ENCODE measurements at regions of chr5 and their contacts with region 1.

Region 1: GRCh38 chr5:126339215-126339805 is 83.9 kb upstream of the GRAMD2B start:
- DNase-seq: no peak
- H3K4me3 ChIP-seq: no peak overlapping the region
- H3K27ac ChIP-seq: no peak overlapping the region
- H3K4me1 ChIP-seq: no peaks in the 10 kb centered on the region
- H3K27me3 ChIP-seq: no peaks in the 10 kb centered on the region
- CTCF ChIP-seq: peak; percentile 78 to 93 (median 91)
- EP300 ChIP-seq: no peak
- POLR2A ChIP-seq: no peak

Region 2: DNA sequence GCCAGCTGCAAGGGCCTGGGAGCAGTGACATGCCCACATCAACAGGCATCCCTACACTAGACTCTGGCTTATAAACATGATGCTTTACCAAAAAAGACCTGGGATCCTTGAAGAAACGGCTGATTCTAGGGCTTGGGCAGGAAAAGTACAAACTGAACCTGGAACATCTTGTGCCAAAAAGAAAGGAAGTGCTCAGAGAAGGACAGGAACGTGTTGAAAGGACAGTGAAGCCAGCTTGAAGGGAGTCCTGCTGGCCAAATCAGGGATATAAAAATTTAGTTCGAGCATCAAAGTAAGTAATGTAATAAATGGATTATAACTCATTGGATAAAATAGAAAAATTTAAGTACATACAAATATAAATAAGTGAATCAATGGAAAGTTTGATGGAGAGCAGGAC is 197.6 kb after region 1 on chr5:
- intact Hi-C with region 1: loop called (anchors 2 kb)
- DNase-seq: no peak
- H3K4me3 ChIP-seq: no peak overlapping the region
- H3K27ac ChIP-seq: peak overlapping the region in 2 of 4 donors; percentile 3 to 26
- H3K4me1 ChIP-seq: peaks cover 4 to 34% (median 27%) of the 10 kb centered on the region in 4 donors
- H3K27me3 ChIP-seq: no peaks in the 10 kb centered on the region
- CTCF ChIP-seq: peak in 1 of 3 experiments; percentile 28
- EP300 ChIP-seq: peak; percentile 31
- POLR2A ChIP-seq: no peak

Region 3: GRCh38 chr5:126600631-126601511 is 261.6 kb after region 1 on chr5 and contains the start of gene PHAX:
- intact Hi-C with region 1: loop called (anchors 2 kb)
- DNase-seq: no peak
- H3K4me3 ChIP-seq: peak within 1 kb of the TSS; percentile 88 to 99 (median 94)
- H3K27ac ChIP-seq: peak within 1 kb of the TSS; percentile 85 to 95 (median 90)
- H3K4me1 ChIP-seq: peaks cover 31 to 51% (median 41%) of the 10 kb centered on the region in 4 donors
- H3K27me3 ChIP-seq: no peaks in the 10 kb centered on the region
- CTCF ChIP-seq: peak; percentile 70 to 78 (median 76)
- EP300 ChIP-seq: no peak
- POLR2A ChIP-seq: no peak
- total RNA-seq, gene PHAX: 37.8 to 49.0 (median 42.9) TPM